Endothelial cell of umbilical vein (primary cell): ENCODE measurements at regions of chr13 and their contacts with region 1.

Region 1: DNA sequence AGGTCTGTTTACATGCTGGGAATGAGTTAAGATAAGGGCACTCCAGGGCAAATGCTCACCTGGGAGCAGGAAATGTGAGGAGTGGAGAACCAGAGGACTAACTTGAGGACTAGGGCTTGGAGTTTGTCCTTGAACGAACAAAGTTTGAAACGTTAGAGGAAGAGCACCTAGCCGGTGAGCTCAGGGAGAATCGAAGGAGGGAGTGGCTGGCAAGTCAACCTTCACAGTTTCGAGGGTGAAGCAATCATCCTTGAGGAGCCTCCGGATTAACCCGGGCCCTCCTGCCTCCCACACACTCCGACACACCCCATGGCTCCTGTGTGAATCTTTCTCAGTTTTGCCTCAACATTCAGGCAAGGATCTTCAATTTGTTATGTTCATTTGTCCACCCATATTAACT is 58.6 kb downstream of the LMO7 start:
- DNase-seq: no peak
- H3K4me3 ChIP-seq: no peak overlapping the region
- H3K27ac ChIP-seq: no peak overlapping the region
- H3K4me1 ChIP-seq: no peaks in the 10 kb centered on the region
- H3K27me3 ChIP-seq: no peaks in the 10 kb centered on the region
- CTCF ChIP-seq: no peak
- POLR2A ChIP-seq: no peak

Region 2: GRCh38 chr13:75715601-75716523 is 21.1 kb after region 1 on chr13:
- CTCF ChIA-PET with region 1: interaction called, 23 read pairs
- POLR2A ChIA-PET with region 1: no interaction called
- dilution Hi-C with region 1: no loop called
- intact Hi-C with region 1: no loop called
- DNase-seq: peak; percentile 37
- H3K4me3 ChIP-seq: no peak overlapping the region
- H3K27ac ChIP-seq: no peak overlapping the region
- H3K4me1 ChIP-seq: peaks cover 5% of the 10 kb centered on the region
- H3K27me3 ChIP-seq: no peaks in the 10 kb centered on the region
- CTCF ChIP-seq: no peak
- POLR2A ChIP-seq: no peak

Region 3: DNA sequence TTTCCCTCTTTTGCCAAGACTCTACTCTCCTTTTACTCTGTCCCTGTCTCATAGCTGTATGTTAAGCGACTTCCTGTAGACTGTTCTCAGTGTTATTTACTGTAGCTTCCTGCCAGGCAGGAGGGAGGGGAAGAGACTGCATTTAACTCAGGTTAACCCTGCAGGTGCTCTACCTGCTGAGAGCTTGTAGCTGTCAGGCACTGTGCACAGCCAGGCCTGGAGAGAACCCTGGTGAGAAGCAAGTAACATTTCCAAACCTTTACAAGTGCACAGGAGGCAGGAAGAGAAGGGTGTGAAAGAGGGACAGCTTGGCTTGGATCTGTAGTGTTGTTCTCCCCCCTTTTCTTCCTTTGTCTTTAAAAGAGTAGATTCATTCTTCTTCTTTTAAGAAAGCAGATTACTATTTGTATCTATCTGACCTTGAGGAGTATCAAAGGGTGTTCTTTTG is 108.5 kb after region 1 on chr13:
- CTCF ChIA-PET with region 1: interaction called, 12 read pairs
- POLR2A ChIA-PET with region 1: no interaction called
- dilution Hi-C with region 1: no loop called
- intact Hi-C with region 1: loop called (anchors 2 kb)
- DNase-seq: peak; percentile 24
- H3K4me3 ChIP-seq: no peak overlapping the region
- H3K27ac ChIP-seq: no peak overlapping the region
- H3K4me1 ChIP-seq: peaks cover 9% of the 10 kb centered on the region
- H3K27me3 ChIP-seq: no peaks in the 10 kb centered on the region
- CTCF ChIP-seq: no peak
- POLR2A ChIP-seq: no peak

Region 4: GRCh38 chr13:75870397-75870903 is 175.7 kb after region 1 on chr13:
- CTCF ChIA-PET with region 1: interaction called, 134 read pairs
- POLR2A ChIA-PET with region 1: no interaction called
- dilution Hi-C with region 1: no loop called
- intact Hi-C with region 1: loop called (anchors 1 kb)
- DNase-seq: peak; percentile 36
- H3K4me3 ChIP-seq: peak overlapping the region; percentile 28 to 74 (median 37)
- H3K27ac ChIP-seq: no peak overlapping the region
- H3K4me1 ChIP-seq: peaks cover 4% of the 10 kb centered on the region
- H3K27me3 ChIP-seq: peaks cover 0 to 2% of the 10 kb centered on the region in 2 experiments
- CTCF ChIP-seq: peak; percentile 58 to 59
- POLR2A ChIP-seq: no peak

Region 5: DNA sequence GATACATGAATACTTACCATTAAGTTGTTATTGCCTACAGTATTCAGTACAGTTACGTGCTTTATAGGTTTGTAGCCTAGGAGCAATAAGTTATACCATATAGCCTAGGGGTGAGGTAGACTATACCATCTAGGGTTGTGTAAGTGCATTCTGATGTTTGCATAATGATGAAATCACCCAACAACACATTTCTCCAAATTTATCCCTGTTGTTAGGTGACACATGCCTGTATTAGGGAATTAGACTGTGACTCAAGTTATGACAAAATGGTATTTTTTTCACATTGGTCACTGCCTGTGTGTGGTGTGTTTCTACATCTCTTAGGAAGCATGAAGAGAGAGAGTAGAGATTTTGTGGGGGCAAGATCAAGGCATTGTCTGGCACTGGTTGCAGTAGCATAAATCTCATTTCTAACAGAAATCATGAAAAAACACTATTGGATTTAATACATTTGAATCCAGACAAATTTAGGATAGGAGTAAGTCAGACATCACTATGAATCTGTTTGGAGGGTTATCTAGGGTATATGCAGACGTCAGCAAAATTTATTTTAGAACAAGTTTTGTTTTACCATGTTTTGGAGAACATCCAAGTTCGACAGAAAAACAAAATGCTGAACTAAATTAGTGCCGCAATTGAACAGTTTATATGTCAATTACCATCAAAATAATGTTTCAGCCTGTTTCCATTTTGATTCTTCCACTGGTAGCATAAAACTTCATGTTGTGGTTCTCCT is 273.5 kb after region 1 on chr13:
- CTCF ChIA-PET with region 1: no interaction called
- POLR2A ChIA-PET with region 1: no interaction called
- dilution Hi-C with region 1: no loop called
- intact Hi-C with region 1: no loop called
- DNase-seq: no peak
- H3K4me3 ChIP-seq: no peak overlapping the region
- H3K27ac ChIP-seq: no peak overlapping the region
- H3K4me1 ChIP-seq: no peaks in the 10 kb centered on the region
- H3K27me3 ChIP-seq: no peaks in the 10 kb centered on the region
- CTCF ChIP-seq: no peak
- POLR2A ChIP-seq: no peak

Region 6: DNA sequence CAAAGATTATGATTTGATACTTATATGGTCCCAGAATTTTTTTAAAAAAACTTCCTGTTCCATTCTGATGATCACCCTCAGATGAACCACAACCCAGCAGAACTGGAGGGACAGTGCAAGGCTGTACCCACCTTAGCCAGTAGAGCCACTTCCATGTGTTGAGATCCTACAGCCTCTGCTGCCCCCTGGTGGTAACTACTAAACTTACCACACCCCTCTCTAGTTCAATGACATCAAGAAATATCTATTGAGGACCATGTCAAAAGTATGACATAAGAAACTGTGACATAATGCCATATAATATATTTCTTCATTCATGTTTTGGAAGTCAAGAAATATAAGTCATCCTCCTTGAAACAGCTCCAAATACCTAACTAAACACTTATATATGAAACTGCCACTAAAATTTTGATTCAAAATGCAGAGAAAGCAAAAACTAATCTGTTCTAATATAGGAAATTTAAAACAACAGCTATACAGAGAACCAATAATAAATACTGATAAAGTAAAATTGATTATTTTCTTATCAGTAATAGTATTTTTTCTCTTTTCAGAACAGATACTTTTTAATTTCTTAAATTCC is 778.9 kb after region 1 on chr13:
- CTCF ChIA-PET with region 1: interaction called, 24 read pairs
- POLR2A ChIA-PET with region 1: no interaction called
- dilution Hi-C with region 1: no loop called
- intact Hi-C with region 1: loop called (anchors 2 kb)
- DNase-seq: peak; percentile 85
- H3K4me3 ChIP-seq: no peak overlapping the region
- H3K27ac ChIP-seq: no peak overlapping the region
- H3K4me1 ChIP-seq: no peaks in the 10 kb centered on the region
- H3K27me3 ChIP-seq: peaks cover 2% of the 10 kb centered on the region in 2 experiments
- CTCF ChIP-seq: peak; percentile 67 to 68
- POLR2A ChIP-seq: no peak

Region 7: GRCh38 chr13:77002590-77003190 is 1308.0 kb after region 1 on chr13:
- CTCF ChIA-PET with region 1: interaction called, 17 read pairs
- POLR2A ChIA-PET with region 1: no interaction called
- dilution Hi-C with region 1: no loop called
- intact Hi-C with region 1: no loop called
- DNase-seq: peak; percentile 57
- H3K4me3 ChIP-seq: no peak overlapping the region
- H3K27ac ChIP-seq: no peak overlapping the region
- H3K4me1 ChIP-seq: no peaks in the 10 kb centered on the region
- H3K27me3 ChIP-seq: no peaks in the 10 kb centered on the region
- CTCF ChIP-seq: peak; percentile 55 to 67
- POLR2A ChIP-seq: no peak